Naive thymus-derived CD4-positive, alpha-beta T cell (primary cell): ENCODE measurements at regions of chr2 and their contacts with region 1.

Region 1: DNA sequence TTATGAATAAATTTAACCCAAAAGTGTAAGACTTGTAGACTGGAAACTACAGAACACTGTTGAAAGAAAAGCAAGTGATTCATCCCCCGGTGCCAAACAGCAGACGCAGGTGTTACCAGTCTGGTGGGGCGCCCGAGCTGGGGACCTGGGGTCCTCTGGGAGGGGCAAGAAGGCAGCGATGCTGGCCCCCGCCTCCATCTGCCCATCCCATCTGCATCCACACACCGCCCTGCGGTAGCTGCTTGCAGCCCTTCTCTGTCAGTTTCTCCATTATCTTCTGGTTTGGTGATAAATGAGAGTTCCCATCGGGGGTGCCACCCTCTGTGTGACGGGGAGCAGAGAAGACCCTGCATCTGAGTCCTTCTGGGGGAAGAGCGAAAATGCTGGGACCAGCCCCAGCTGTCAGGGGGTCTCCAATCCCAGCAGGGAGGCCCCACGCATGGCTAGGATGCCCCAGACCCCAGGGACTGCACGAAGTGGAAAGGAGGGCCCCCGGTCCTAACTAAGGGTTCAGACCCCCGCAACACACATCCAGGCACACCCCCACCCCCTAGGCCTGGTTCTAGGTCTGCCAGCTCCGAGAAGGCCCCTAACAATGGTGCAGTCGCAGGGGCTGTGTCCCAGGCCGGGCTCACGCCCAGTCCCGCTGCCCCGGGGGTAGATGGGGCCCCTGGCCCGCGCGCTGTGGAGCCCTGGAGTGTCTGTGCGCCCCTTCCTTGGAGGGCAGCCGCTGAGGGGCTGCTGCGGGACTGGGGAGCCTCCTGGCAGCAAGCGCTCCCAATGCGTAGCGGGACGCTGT is 686 bp upstream of the RGPD8 start:
- DNase-seq: peak in 1 of 9 donors; percentile 3
- ATAC-seq: no peak
- H3K4me3 ChIP-seq: no peak overlapping the region
- H3K4me3 Mint-ChIP-seq: peak overlapping the region in 4 of 10 donors; percentile 15 to 81 (median 60)
- H3K27ac ChIP-seq: no peak overlapping the region
- H3K27ac Mint-ChIP-seq: peak overlapping the region in 4 of 9 donors; percentile 6 to 84 (median 63)
- H3K4me1 ChIP-seq: no peaks in the 10 kb centered on the region
- H3K4me1 Mint-ChIP-seq: peaks cover 7 to 30% (median 22%) of the 10 kb centered on the region in 7 donors
- H3K27me3 ChIP-seq: no peaks in the 10 kb centered on the region
- H3K27me3 Mint-ChIP-seq: peaks cover 0 to 13% (median 6%) of the 10 kb centered on the region in 5 donors

Region 2: GRCh38 chr2:112259509-112260294 is 174.4 kb before region 1 on chr2:
- CTCF ChIA-PET with region 1: interaction called, 3 read pairs
- POLR2A ChIA-PET with region 1: interaction called, 3 read pairs
- intact Hi-C with region 1: loop called in 1 of 2 experiments (anchors 2 kb)
- DNase-seq: peak; percentile 63 to 85 (median 79)
- ATAC-seq: peak; percentile 69
- H3K4me3 ChIP-seq: peak overlapping the region; percentile 36
- H3K4me3 Mint-ChIP-seq: peak overlapping the region; percentile 19 to 78 (median 70)
- H3K27ac ChIP-seq: no peak overlapping the region
- H3K27ac Mint-ChIP-seq: peak overlapping the region; percentile 16 to 91 (median 70)
- H3K4me1 ChIP-seq: peaks cover 0 to 6% of the 10 kb centered on the region in 2 donors
- H3K4me1 Mint-ChIP-seq: peaks cover 4 to 23% (median 7%) of the 10 kb centered on the region in 7 donors
- H3K27me3 ChIP-seq: no peaks in the 10 kb centered on the region
- H3K27me3 Mint-ChIP-seq: peaks cover 0 to 9% (median 5%) of the 10 kb centered on the region in 5 donors

Region 3: GRCh38 chr2:112941753-112942658 is 507.9 kb after region 1 on chr2:
- CTCF ChIA-PET with region 1: no interaction called
- POLR2A ChIA-PET with region 1: no interaction called
- intact Hi-C with region 1: no loop called
- DNase-seq: peak in 8 of 9 donors; percentile 7 to 73 (median 22)
- ATAC-seq: peak; percentile 88
- H3K4me3 ChIP-seq: no peak overlapping the region
- H3K4me3 Mint-ChIP-seq: no peak overlapping the region
- H3K27ac ChIP-seq: no peak overlapping the region
- H3K27ac Mint-ChIP-seq: peak overlapping the region in 1 of 9 donors; percentile 15
- H3K4me1 ChIP-seq: no peaks in the 10 kb centered on the region
- H3K4me1 Mint-ChIP-seq: peaks cover 0 to 4% (median 0%) of the 10 kb centered on the region in 7 donors
- H3K27me3 ChIP-seq: no peaks in the 10 kb centered on the region
- H3K27me3 Mint-ChIP-seq: peaks cover 0 to 43% (median 0%) of the 10 kb centered on the region in 5 donors